ENCODE measurements at regions of chr18 and their contacts with region 1.

Region 1: GRCh38 chr18:44679056-44679905 is 1.4 kb upstream of the SETBP1 start:
- DNase-seq: peak; percentile 86
- H3K4me3 ChIP-seq: peak overlapping the region; percentile 78
- H3K27ac ChIP-seq: peak overlapping the region; percentile 98
- H3K4me1 ChIP-seq: no peaks in the 10 kb centered on the region
- H3K27me3 ChIP-seq: no peaks in the 10 kb centered on the region
- CTCF ChIP-seq: peak; percentile 65 to 88 (median 72)
- POLR2A ChIP-seq: peak; percentile 66

Region 2: DNA sequence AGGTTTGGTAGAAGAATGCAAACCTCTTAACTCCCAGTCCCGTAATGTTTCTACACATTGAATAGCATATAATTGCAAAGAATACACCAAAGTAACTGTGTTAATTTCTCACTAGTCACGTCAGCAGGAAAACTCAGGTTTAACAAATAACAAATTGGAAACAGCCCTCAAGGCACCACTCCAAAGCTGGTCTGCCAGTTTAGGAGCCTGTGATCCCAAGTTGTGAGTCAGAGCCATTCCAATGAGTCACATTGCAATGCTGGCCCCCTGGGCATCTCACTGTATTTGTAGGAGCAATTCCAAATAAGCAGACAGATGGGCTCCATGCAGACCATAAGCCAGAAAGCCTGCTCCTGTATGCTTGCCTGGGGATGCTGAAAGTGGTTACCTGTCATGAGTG is 141.8 kb before region 1 on chr18:
- intact Hi-C with region 1: no loop called
- DNase-seq: no peak
- H3K4me3 ChIP-seq: no peak overlapping the region
- H3K27ac ChIP-seq: no peak overlapping the region
- H3K4me1 ChIP-seq: no peaks in the 10 kb centered on the region
- H3K27me3 ChIP-seq: no peaks in the 10 kb centered on the region
- CTCF ChIP-seq: no peak
- POLR2A ChIP-seq: no peak

Region 3: GRCh38 chr18:44564922-44565321 is 114.4 kb before region 1 on chr18:
- intact Hi-C with region 1: no loop called
- DNase-seq: peak; percentile 24
- H3K4me3 ChIP-seq: no peak overlapping the region
- H3K27ac ChIP-seq: no peak overlapping the region
- H3K4me1 ChIP-seq: no peaks in the 10 kb centered on the region
- H3K27me3 ChIP-seq: no peaks in the 10 kb centered on the region
- CTCF ChIP-seq: no peak
- POLR2A ChIP-seq: no peak

Region 4: DNA sequence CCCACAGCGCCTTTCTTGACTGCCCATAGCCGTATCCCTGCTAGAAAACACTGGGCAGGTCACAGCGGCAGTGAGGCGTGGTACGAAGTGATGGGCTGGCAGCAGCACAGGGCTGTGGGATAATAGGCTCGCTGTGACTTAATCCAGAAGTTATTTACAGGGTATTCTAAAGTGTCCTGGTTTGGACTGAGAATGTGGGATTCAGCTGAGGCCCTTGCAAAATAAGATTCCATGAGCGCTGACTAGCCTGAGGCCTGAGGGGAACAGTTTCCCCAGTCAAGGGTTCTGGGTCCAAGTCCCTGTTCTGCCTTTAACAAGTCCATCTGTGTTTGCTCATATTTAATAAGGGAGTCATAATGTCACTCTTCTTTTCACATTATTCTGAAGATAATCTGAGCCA is 36.0 kb after region 1 on chr18:
- intact Hi-C with region 1: loop called (anchors 2 kb)
- DNase-seq: peak; percentile 68
- H3K4me3 ChIP-seq: no peak overlapping the region
- H3K27ac ChIP-seq: peak overlapping the region; percentile 60 to 76
- H3K4me1 ChIP-seq: peaks cover 11% of the 10 kb centered on the region
- H3K27me3 ChIP-seq: no peaks in the 10 kb centered on the region
- CTCF ChIP-seq: no peak
- POLR2A ChIP-seq: no peak

Region 5: DNA sequence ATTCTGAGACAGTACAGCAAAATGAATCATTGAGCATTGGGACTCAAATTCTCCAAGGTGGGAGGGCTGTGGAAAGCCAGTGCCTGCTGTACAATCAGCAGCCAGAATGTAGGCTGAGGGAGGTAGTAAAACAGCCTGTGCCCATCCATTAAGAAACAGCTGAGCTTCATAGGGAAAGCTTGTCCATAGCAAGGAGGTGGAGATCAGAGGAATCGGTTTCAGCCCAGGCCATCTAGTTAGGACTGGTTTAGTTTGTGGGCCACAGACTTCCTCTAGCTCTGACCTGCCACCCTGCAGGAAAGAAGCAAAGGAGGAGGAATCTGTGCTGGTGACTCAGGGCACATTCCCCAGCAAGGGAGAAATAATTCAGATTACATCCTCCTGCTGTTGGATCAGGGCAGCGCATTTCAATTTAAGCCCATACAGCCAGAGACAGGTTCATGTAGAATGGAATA is 334.8 kb after region 1 on chr18:
- intact Hi-C with region 1: loop called (anchors 10 kb)
- DNase-seq: no peak
- H3K4me3 ChIP-seq: no peak overlapping the region
- H3K27ac ChIP-seq: peak overlapping the region in 1 of 2 donors; percentile 8
- H3K4me1 ChIP-seq: no peaks in the 10 kb centered on the region
- H3K27me3 ChIP-seq: no peaks in the 10 kb centered on the region
- CTCF ChIP-seq: peak in 1 of 4 experiments; percentile 8
- POLR2A ChIP-seq: no peak

Region 6: DNA sequence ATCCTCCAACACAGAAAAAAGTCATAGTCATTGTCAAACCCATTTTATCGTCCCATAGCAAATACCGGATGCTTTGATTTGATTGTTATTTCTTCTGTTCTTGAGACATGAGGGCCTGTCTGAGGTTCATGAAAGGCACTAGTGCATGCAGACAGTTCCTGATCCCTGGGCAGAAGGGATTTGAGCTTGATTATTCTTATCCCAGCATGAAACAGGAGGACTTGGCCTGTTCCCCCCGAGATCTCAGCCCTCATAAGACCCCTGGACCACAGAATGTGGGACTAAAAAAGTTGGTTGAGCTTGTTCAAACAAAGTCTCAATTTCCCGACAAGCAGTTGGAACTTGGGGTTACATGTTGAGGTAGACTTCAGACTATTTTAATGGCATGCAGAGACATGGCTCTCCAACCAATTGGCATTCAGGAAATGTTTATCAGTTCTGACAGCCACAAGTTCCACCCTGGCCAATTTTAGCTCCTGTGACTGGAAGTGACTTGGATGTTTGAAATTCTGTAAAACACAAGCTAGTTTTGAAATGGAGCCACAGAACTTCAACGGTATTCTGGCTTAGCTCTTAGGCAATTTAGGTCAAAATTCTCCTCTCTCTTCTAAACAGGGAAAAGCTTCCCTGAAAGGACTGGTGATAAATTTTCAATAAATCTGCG is 569.1 kb after region 1 on chr18:
- intact Hi-C with region 1: loop called (anchors 2 kb)
- DNase-seq: peak; percentile 51
- H3K4me3 ChIP-seq: no peak overlapping the region
- H3K27ac ChIP-seq: peak overlapping the region; percentile 14 to 36
- H3K4me1 ChIP-seq: no peaks in the 10 kb centered on the region
- H3K27me3 ChIP-seq: no peaks in the 10 kb centered on the region
- CTCF ChIP-seq: no peak
- POLR2A ChIP-seq: no peak

Region 7: GRCh38 chr18:45441110-45441842 is 762.0 kb after region 1 on chr18:
- intact Hi-C with region 1: loop called (anchors 10 kb)
- DNase-seq: no peak
- H3K4me3 ChIP-seq: no peak overlapping the region
- H3K27ac ChIP-seq: no peak overlapping the region
- H3K4me1 ChIP-seq: no peaks in the 10 kb centered on the region
- H3K27me3 ChIP-seq: no peaks in the 10 kb centered on the region
- CTCF ChIP-seq: peak in 2 of 4 experiments; percentile 32
- POLR2A ChIP-seq: no peak